Naive thymus-derived CD4-positive, alpha-beta T cell (primary cell): ENCODE measurements at regions of chr19 and their contacts with region 1.

Region 1: GRCh38 chr19:40348125-40348913 is at the starts of genes C19orf47 and PLD3:
- DNase-seq: peak; percentile 92 to 99 (median 97)
- ATAC-seq: peak; percentile 97
- H3K4me3 ChIP-seq: peak within 1 kb of the TSS; percentile 61
- H3K4me3 Mint-ChIP-seq: peak within 1 kb of the TSS; percentile 83 to 99 (median 96)
- H3K27ac ChIP-seq: peak within 1 kb of the TSS; percentile 86
- H3K27ac Mint-ChIP-seq: peak within 1 kb of the TSS; percentile 81 to 98 (median 93)
- H3K4me1 ChIP-seq: peaks cover 7 to 14% of the 10 kb centered on the region in 2 donors
- H3K4me1 Mint-ChIP-seq: peaks cover 20 to 51% (median 44%) of the 10 kb centered on the region in 7 donors
- H3K27me3 ChIP-seq: no peaks in the 10 kb centered on the region
- H3K27me3 Mint-ChIP-seq: peaks cover 0 to 2% (median 0%) of the 10 kb centered on the region in 5 donors
- total RNA-seq, gene C19orf47: 12.6 to 20.3 (median 15.8) TPM
- total RNA-seq, gene PLD3: 75.4 to 137 (median 114) TPM

Region 2: DNA sequence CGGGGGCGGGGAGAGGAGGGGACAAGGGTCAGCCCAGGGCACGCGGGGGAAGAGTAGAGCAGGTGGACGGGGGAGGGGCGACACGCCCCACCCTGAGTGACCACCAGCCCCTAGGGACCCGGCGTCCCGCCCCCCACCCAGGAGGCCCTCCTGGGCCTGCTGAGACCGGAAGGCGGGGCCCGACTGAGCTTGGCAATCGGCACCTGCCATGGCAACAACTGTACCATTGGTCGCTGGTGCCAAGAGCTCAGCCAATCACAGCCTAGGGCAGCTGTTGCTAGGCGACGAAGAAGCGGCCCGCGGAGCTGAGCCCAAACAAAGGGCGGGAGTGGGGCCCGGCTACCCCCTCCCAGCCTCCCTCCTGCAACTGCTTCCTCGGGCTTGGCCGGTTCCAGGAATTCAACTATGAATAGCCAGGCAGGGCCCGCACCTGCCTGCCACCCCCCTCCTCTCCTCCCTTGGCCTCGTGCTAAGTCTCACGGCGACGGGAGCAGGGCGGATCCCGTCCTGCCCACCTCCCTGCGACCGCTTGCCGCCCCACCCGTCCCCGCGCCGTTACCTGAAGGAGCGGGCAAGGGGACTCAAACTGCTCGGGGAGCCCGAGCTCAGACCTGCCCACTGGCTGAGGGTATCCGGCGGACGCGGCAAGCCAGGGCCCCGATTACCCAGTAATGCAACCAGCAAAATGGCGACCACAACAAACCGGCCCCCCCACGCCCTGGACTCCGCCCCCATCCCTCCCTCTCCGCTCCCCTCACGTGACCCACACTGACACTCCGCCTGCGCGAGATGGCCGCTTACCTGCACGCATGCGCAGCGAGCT is 514.6 kb before region 1 on chr19 and contains the start of gene DYRK1B:
- CTCF ChIA-PET with region 1: no interaction called
- POLR2A ChIA-PET with region 1: no interaction called
- intact Hi-C with region 1: loop called in 1 of 2 experiments (anchors 1 kb)
- DNase-seq: peak; percentile 90 to 99 (median 98)
- ATAC-seq: peak; percentile 92
- H3K4me3 ChIP-seq: peak within 1 kb of the TSS; percentile 100
- H3K4me3 Mint-ChIP-seq: peak within 1 kb of the TSS; percentile 60 to 88 (median 81)
- H3K27ac ChIP-seq: peak within 1 kb of the TSS; percentile 96
- H3K27ac Mint-ChIP-seq: peak within 1 kb of the TSS; percentile 85 to 96 (median 92)
- H3K4me1 ChIP-seq: peaks cover 17 to 23% of the 10 kb centered on the region in 2 donors
- H3K4me1 Mint-ChIP-seq: peaks cover 19 to 37% (median 27%) of the 10 kb centered on the region in 7 donors
- H3K27me3 ChIP-seq: no peaks in the 10 kb centered on the region
- H3K27me3 Mint-ChIP-seq: no peaks in the 10 kb centered on the region
- total RNA-seq, gene DYRK1B: 12.3 to 38.9 (median 23.5) TPM

Region 3: DNA sequence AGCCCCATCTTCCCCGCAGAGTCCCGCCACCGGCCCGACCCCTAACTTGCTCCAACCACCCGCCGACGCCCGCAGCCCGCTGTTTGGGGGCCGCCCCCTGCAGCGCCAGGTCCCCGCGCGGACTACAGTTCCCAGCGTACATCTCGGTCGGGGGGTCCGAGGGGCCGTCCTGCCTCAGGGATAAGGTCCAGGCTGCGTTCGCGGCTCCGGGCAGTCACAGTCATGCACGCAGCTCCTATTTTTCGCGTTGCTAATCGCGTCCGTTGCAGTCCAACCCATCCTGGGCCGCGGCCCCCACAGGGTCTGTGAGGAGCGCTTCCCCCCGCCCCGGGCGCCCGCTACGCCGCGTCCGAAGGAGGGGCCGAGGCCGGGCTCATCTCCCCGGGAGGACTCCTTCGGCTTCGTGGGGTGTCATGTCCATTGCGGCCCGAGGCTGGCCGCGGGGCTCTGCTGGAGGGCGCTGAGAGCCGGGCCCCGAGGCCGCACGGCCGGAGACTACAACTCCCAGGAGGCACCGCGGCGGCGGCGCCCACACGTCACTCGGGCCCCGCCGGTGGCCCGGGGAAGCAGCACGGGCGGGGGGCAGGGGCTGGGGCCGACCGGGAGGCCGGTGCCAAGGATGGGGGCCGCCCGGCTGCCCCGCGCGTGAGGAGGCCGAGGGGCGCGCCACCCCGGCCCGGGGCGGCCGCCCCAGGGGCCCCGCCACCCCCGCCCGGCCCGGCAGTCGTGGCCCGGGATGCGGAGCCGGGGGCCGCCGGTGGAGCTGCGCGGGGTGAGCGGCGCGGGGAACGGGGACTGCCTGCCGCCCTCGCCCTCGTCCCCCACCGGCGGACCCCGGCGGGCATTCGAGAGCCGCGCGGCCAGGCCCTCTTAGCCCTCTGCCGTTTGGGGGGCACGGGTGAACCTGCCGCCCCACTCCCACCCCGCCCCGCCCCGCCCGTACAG is 157.2 kb before region 1 on chr19 and contains the start of gene MAP3K10:
- CTCF ChIA-PET with region 1: no interaction called
- POLR2A ChIA-PET with region 1: interaction called, 6 read pairs
- intact Hi-C with region 1: loop called in 1 of 2 experiments (anchors 2 kb)
- DNase-seq: peak; percentile 50 to 84 (median 67)
- ATAC-seq: peak; percentile 95
- H3K4me3 ChIP-seq: peak within 1 kb of the TSS; percentile 97
- H3K4me3 Mint-ChIP-seq: peak within 1 kb of the TSS; percentile 76 to 92 (median 86)
- H3K27ac ChIP-seq: peak within 1 kb of the TSS; percentile 86
- H3K27ac Mint-ChIP-seq: peak within 1 kb of the TSS; percentile 53 to 94 (median 87)
- H3K4me1 ChIP-seq: peaks cover 5 to 10% of the 10 kb centered on the region in 2 donors
- H3K4me1 Mint-ChIP-seq: peaks cover 14 to 39% (median 30%) of the 10 kb centered on the region in 7 donors
- H3K27me3 ChIP-seq: no peaks in the 10 kb centered on the region
- H3K27me3 Mint-ChIP-seq: no peaks in the 10 kb centered on the region
- total RNA-seq, gene MAP3K10: 22.3 to 31.5 (median 27.0) TPM

Region 4: DNA sequence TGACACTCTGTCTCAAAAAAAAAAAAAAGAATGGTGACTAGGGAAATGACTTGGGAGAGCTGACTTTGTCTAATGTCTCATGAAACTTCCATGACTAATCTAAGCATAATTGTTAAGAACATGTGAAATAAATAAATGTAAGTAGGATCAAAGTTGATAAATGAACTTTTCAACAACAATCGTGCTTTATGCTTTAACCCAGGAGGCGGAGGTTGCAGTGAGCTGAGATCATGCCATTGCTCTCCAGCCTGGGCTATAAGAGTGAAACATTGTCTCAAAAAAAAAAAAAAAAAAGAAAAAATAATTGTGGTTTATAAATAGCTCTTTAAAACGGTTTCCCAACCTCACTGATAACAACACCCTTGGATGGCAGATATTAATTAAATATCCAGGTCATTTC is 50.3 kb before region 1 on chr19:
- CTCF ChIA-PET with region 1: no interaction called
- POLR2A ChIA-PET with region 1: no interaction called
- intact Hi-C with region 1: no loop called
- DNase-seq: no peak
- ATAC-seq: no peak
- H3K4me3 ChIP-seq: no peak overlapping the region
- H3K4me3 Mint-ChIP-seq: no peak overlapping the region
- H3K27ac ChIP-seq: no peak overlapping the region
- H3K27ac Mint-ChIP-seq: no peak overlapping the region
- H3K4me1 ChIP-seq: no peaks in the 10 kb centered on the region
- H3K4me1 Mint-ChIP-seq: no peaks in the 10 kb centered on the region
- H3K27me3 ChIP-seq: no peaks in the 10 kb centered on the region
- H3K27me3 Mint-ChIP-seq: no peaks in the 10 kb centered on the region

Region 5: GRCh38 chr19:40403262-40403984 is 55.1 kb after region 1 on chr19:
- CTCF ChIA-PET with region 1: no interaction called
- POLR2A ChIA-PET with region 1: interaction called, 4 read pairs
- intact Hi-C with region 1: loop called (anchors 1 kb)
- DNase-seq: peak; percentile 54 to 84 (median 69)
- ATAC-seq: peak; percentile 80
- H3K4me3 ChIP-seq: peak overlapping the region; percentile 74
- H3K4me3 Mint-ChIP-seq: peak overlapping the region; percentile 78 to 98 (median 93)
- H3K27ac ChIP-seq: peak overlapping the region; percentile 79
- H3K27ac Mint-ChIP-seq: peak overlapping the region; percentile 75 to 93 (median 86)
- H3K4me1 ChIP-seq: peaks cover 5 to 12% of the 10 kb centered on the region in 2 donors
- H3K4me1 Mint-ChIP-seq: peaks cover 22 to 42% (median 36%) of the 10 kb centered on the region in 7 donors
- H3K27me3 ChIP-seq: no peaks in the 10 kb centered on the region
- H3K27me3 Mint-ChIP-seq: peaks cover 0 to 6% (median 0%) of the 10 kb centered on the region in 5 donors

Region 6: GRCh38 chr19:40425450-40426287 is 77.3 kb after region 1 on chr19 and contains the start of gene SERTAD1:
- CTCF ChIA-PET with region 1: no interaction called
- POLR2A ChIA-PET with region 1: interaction called, 8 read pairs
- intact Hi-C with region 1: loop called (anchors 1 kb)
- DNase-seq: peak; percentile 99 to 100 (median 100)
- ATAC-seq: peak; percentile 96
- H3K4me3 ChIP-seq: peak within 1 kb of the TSS; percentile 77
- H3K4me3 Mint-ChIP-seq: peak within 1 kb of the TSS; percentile 90 to 99 (median 96)
- H3K27ac ChIP-seq: peak within 1 kb of the TSS; percentile 87
- H3K27ac Mint-ChIP-seq: peak within 1 kb of the TSS; percentile 92 to 100 (median 98)
- H3K4me1 ChIP-seq: peaks cover 15 to 18% of the 10 kb centered on the region in 2 donors
- H3K4me1 Mint-ChIP-seq: peaks cover 12 to 38% (median 24%) of the 10 kb centered on the region in 7 donors
- H3K27me3 ChIP-seq: no peaks in the 10 kb centered on the region
- H3K27me3 Mint-ChIP-seq: peaks cover 0 to 2% (median 0%) of the 10 kb centered on the region in 5 donors
- total RNA-seq, gene SERTAD1: 8.1 to 30.9 (median 13.5) TPM

Region 7: DNA sequence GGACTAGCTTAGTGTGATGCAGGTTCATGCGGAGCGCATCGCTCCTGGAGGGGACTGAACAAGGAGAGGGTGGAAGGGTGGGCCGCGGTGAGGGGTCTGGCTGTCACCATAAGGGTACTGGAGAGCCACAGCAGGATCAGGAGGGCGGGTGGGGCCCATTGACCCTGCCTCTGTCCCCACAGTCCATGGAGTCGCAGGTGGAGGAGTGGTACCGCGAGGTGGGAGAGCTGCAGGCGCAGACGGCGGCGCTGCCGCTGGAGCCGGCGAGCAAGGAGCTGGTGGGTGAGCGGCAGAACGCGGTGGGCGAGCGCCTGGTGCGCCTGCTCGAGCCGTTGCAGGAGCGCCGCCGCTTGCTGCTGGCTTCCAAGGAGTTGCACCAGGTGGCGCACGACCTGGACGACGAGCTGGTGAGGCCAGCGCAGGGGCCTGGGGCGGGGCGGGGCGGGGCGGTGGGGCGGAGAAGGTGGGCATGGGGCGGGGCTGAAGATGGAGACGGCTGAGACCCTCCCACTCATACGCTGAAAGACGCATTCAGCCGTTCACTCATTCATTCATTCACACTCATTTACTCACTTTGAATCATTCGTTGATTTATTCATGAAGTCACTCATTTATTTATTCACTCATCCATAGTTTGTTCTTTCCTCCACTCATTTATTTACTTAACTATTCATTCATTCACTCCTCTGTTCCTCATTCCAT is 200.8 kb after region 1 on chr19:
- CTCF ChIA-PET with region 1: no interaction called
- POLR2A ChIA-PET with region 1: no interaction called
- intact Hi-C with region 1: no loop called
- DNase-seq: peak; percentile 26 to 74 (median 57)
- ATAC-seq: peak; percentile 95
- H3K4me3 ChIP-seq: no peak overlapping the region
- H3K4me3 Mint-ChIP-seq: peak overlapping the region in 8 of 10 donors; percentile 13 to 73 (median 54)
- H3K27ac ChIP-seq: no peak overlapping the region
- H3K27ac Mint-ChIP-seq: no peak overlapping the region
- H3K4me1 ChIP-seq: peaks cover 0 to 5% of the 10 kb centered on the region in 2 donors
- H3K4me1 Mint-ChIP-seq: peaks cover 0 to 14% (median 12%) of the 10 kb centered on the region in 7 donors
- H3K27me3 ChIP-seq: peaks cover 0 to 10% of the 10 kb centered on the region in 2 donors
- H3K27me3 Mint-ChIP-seq: peaks cover 38 to 60% (median 52%) of the 10 kb centered on the region in 5 donors

Region 8: DNA sequence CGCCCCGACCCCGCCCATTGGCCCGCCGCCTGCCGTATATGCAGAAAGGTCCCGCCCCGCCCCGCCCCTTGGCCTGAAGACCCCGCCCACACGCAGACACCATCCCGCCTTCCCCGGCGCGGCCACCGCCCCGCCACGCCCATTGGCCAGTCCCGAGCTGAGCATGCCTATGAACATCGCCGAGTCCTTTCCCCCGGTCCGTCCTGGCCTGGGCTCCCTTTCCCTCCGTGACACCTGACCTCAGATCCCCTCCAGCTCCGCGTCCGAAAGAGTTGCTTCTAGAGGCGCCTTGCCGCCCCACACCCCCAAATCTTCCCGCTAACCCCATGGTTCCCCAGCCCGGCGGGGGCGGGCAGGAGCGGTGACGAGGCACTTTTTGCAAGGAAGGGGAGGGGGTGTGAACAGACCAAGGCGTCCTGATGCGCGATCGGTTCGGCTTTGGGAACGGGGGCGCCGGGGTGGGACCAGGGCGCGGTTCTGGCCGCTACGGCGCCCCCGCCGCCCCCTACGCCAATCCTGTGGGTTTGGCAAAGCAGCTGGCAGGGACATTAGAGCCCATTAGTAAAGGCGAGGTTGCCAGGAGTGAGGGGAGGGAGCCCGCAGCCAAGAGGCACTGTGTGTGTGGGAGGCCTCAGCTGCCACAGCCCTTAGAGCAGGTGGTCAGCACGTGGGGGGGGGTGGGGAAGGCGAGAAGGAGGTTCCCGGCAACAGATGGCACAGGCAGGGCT is 342.5 kb after region 1 on chr19:
- CTCF ChIA-PET with region 1: no interaction called
- POLR2A ChIA-PET with region 1: no interaction called
- intact Hi-C with region 1: loop called in 1 of 2 experiments (anchors 5 kb)
- DNase-seq: peak; percentile 60 to 90 (median 75)
- ATAC-seq: peak; percentile 92
- H3K4me3 ChIP-seq: peak overlapping the region; percentile 68
- H3K4me3 Mint-ChIP-seq: peak overlapping the region in 9 of 10 donors; percentile 78 to 96 (median 91)
- H3K27ac ChIP-seq: peak overlapping the region; percentile 55
- H3K27ac Mint-ChIP-seq: peak overlapping the region in 8 of 9 donors; percentile 58 to 94 (median 74)
- H3K4me1 ChIP-seq: peaks cover 0 to 6% of the 10 kb centered on the region in 2 donors
- H3K4me1 Mint-ChIP-seq: peaks cover 0 to 6% (median 4%) of the 10 kb centered on the region in 7 donors
- H3K27me3 ChIP-seq: no peaks in the 10 kb centered on the region
- H3K27me3 Mint-ChIP-seq: no peaks in the 10 kb centered on the region